Mammary epithelial cell (primary cell): ENCODE measurements at regions of chr20 and their contacts with region 1.

Region 1: GRCh38 chr20:58236612-58237330 is 8.3 kb upstream of the ANKRD60 start:
- DNase-seq: peak; percentile 58
- H3K4me3 ChIP-seq: peak overlapping the region; percentile 51 to 74 (median 52)
- H3K27ac ChIP-seq: peak overlapping the region; percentile 48
- H3K4me1 ChIP-seq: peaks cover 8% of the 10 kb centered on the region
- H3K27me3 ChIP-seq: no peaks in the 10 kb centered on the region
- CTCF ChIP-seq: peak; percentile 92 to 98

Region 2: DNA sequence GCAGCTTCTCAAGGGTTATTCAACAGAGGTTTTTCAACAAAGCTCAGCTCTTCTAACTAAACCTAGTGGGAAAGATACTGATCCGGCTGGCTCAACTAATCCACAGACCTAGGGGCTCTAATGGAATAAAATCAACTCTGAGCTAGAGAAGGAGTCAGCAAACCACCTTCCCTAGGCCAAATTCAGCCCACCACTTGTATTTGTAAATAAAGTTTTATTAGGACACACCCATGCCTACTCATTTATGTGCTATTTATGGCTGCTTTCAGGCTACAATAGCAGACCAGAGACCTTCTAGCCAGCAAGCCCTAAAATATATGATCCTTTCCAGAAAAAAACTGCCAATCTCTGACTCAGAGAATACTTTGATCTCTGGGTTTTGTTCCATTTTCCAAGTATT is 66.8 kb after region 1 on chr20:
- CTCF ChIA-PET with region 1: no interaction called
- dilution Hi-C with region 1: loop called (anchors 5 kb)
- in situ Hi-C with region 1: no loop called
- intact Hi-C with region 1: loop called (anchors 5 kb)
- DNase-seq: no peak
- H3K4me3 ChIP-seq: no peak overlapping the region
- H3K27ac ChIP-seq: no peak overlapping the region
- H3K4me1 ChIP-seq: peaks cover 20% of the 10 kb centered on the region
- H3K27me3 ChIP-seq: no peaks in the 10 kb centered on the region
- CTCF ChIP-seq: no peak

Region 3: GRCh38 chr20:58447511-58448391 is 211.0 kb after region 1 on chr20:
- CTCF ChIA-PET with region 1: no interaction called
- dilution Hi-C with region 1: no loop called
- in situ Hi-C with region 1: no loop called
- intact Hi-C with region 1: loop called (anchors 1 kb)
- DNase-seq: peak; percentile 29
- H3K4me3 ChIP-seq: no peak overlapping the region
- H3K27ac ChIP-seq: no peak overlapping the region
- H3K4me1 ChIP-seq: no peaks in the 10 kb centered on the region
- H3K27me3 ChIP-seq: no peaks in the 10 kb centered on the region
- CTCF ChIP-seq: peak; percentile 66 to 77

Region 4: GRCh38 chr20:58839474-58839874 is 602.7 kb after region 1 on chr20:
- CTCF ChIA-PET with region 1: no interaction called
- dilution Hi-C with region 1: no loop called
- in situ Hi-C with region 1: loop called in 1 of 2 experiments (anchors 25 kb)
- intact Hi-C with region 1: loop called (anchors 5 kb)
- DNase-seq: peak; percentile 16
- H3K4me3 ChIP-seq: peak overlapping the region; percentile 6 to 24 (median 22)
- H3K27ac ChIP-seq: no peak overlapping the region
- H3K4me1 ChIP-seq: no peaks in the 10 kb centered on the region
- H3K27me3 ChIP-seq: peaks cover 9% of the 10 kb centered on the region
- CTCF ChIP-seq: peak in 1 of 2 donors; percentile 54

Region 5: GRCh38 chr20:59455402-59456341 is 1218.9 kb after region 1 on chr20:
- CTCF ChIA-PET with region 1: no interaction called
- dilution Hi-C with region 1: no loop called
- in situ Hi-C with region 1: no loop called
- intact Hi-C with region 1: loop called (anchors 5 kb)
- DNase-seq: peak; percentile 5
- H3K4me3 ChIP-seq: no peak overlapping the region
- H3K27ac ChIP-seq: no peak overlapping the region
- H3K4me1 ChIP-seq: no peaks in the 10 kb centered on the region
- H3K27me3 ChIP-seq: no peaks in the 10 kb centered on the region
- CTCF ChIP-seq: peak; percentile 48 to 63